AG04450 (cell line): ENCODE measurements at regions of chr1 and their contacts with region 1.

Region 1: GRCh38 chr1:187577610-187578009 is 748.9 kb downstream of the PLA2G4A start:
- DNase-seq: no peak
- H3K4me3 ChIP-seq: no peak overlapping the region
- H3K27ac ChIP-seq: no peak overlapping the region
- H3K27me3 ChIP-seq: no peaks in the 10 kb centered on the region
- CTCF ChIP-seq: no peak

Region 2: DNA sequence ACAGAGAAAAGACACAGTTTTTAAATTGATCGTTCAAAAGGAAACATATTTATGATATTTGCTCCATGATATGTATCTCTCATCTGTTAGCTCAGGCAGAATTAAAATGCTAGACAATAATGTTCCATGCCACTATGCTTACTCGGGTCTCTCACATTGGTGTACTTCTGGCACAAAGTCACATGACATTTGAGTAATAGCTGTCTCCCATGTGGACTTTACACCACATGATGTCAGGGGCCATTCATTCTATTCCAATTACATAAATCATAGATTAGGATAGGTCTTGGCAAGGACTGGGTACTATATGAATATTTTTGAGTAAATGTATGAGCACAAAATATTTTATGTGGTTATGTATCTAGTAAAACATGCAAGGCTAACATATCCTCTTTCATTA is 100.5 kb before region 1 on chr1:
- CTCF ChIA-PET with region 1: no interaction called
- POLR2A ChIA-PET with region 1: no interaction called
- DNase-seq: no peak
- H3K4me3 ChIP-seq: no peak overlapping the region
- H3K27ac ChIP-seq: no peak overlapping the region
- H3K27me3 ChIP-seq: no peaks in the 10 kb centered on the region
- CTCF ChIP-seq: no peak

Region 3: GRCh38 chr1:188325211-188325610 is 747.6 kb after region 1 on chr1:
- CTCF ChIA-PET with region 1: interaction called, 10 read pairs
- POLR2A ChIA-PET with region 1: no interaction called
- DNase-seq: no peak
- H3K4me3 ChIP-seq: no peak overlapping the region
- H3K27ac ChIP-seq: no peak overlapping the region
- H3K27me3 ChIP-seq: no peaks in the 10 kb centered on the region
- CTCF ChIP-seq: no peak